Activated CD8-positive, alpha-beta T cell treated with anti-CD3 and anti-CD28 coated beads, Interleukin-2, amount 10 ng/mL, durations not matched to agents 7 days and 5 days (primary cell): ENCODE measurements at regions of chr6 and their contacts with region 1.

Region 1: DNA sequence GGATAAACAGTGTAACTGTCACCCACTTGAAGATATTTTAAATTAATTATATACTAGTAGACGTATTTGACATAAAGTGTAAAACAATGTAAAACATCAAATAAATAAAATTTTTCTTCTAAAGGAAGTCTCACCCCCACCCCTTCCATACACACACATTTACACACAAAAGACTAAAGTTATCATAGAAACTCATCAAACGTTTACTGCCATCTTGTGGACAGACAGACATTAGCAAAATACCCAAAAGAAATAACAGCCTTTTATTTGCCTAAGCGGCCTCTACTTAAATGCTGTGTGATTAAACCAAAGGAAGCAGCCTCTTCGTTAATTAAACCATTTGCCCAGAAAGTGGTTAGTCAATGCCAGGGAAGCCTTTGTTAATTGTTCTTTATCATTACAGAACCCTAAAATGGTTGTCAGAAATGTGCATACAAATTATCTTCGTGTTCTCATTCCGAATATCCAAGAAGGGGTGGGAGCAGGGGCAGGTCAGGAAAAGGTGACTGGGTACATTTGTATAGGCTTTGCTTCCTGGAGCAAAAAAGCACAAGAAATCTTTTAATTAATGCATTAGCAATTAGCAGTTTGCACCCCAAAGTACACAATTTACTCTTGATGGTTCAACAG is 176.2 kb upstream of the SASH1 start:
- DNase-seq: no peak
- ATAC-seq: no peak
- H3K4me3 Mint-ChIP-seq: no peak overlapping the region
- H3K27ac Mint-ChIP-seq: no peak overlapping the region
- H3K4me1 Mint-ChIP-seq: no peaks in the 10 kb centered on the region
- H3K27me3 Mint-ChIP-seq: no peaks in the 10 kb centered on the region

Region 2: GRCh38 chr6:147506704-147507114 is 659.7 kb before region 1 on chr6:
- CTCF ChIA-PET with region 1: interaction called, 11 read pairs
- POLR2A ChIA-PET with region 1: no interaction called
- DNase-seq: peak; percentile 57
- ATAC-seq: peak; percentile 37
- H3K4me3 Mint-ChIP-seq: no peak overlapping the region
- H3K27ac Mint-ChIP-seq: no peak overlapping the region
- H3K4me1 Mint-ChIP-seq: peaks cover 11% of the 10 kb centered on the region
- H3K27me3 Mint-ChIP-seq: peaks cover 47% of the 10 kb centered on the region

Region 3: GRCh38 chr6:148203970-148204369 is 37.5 kb after region 1 on chr6:
- CTCF ChIA-PET with region 1: no interaction called
- POLR2A ChIA-PET with region 1: no interaction called
- DNase-seq: peak; percentile 89
- ATAC-seq: peak; percentile 89
- H3K4me3 Mint-ChIP-seq: peak overlapping the region; percentile 48
- H3K27ac Mint-ChIP-seq: peak overlapping the region; percentile 82
- H3K4me1 Mint-ChIP-seq: peaks cover 20% of the 10 kb centered on the region
- H3K27me3 Mint-ChIP-seq: peaks cover 72% of the 10 kb centered on the region